Naive thymus-derived CD4-positive, alpha-beta T cell (primary cell): ENCODE measurements at regions of chr16 and their contacts with region 1.

Region 1: DNA sequence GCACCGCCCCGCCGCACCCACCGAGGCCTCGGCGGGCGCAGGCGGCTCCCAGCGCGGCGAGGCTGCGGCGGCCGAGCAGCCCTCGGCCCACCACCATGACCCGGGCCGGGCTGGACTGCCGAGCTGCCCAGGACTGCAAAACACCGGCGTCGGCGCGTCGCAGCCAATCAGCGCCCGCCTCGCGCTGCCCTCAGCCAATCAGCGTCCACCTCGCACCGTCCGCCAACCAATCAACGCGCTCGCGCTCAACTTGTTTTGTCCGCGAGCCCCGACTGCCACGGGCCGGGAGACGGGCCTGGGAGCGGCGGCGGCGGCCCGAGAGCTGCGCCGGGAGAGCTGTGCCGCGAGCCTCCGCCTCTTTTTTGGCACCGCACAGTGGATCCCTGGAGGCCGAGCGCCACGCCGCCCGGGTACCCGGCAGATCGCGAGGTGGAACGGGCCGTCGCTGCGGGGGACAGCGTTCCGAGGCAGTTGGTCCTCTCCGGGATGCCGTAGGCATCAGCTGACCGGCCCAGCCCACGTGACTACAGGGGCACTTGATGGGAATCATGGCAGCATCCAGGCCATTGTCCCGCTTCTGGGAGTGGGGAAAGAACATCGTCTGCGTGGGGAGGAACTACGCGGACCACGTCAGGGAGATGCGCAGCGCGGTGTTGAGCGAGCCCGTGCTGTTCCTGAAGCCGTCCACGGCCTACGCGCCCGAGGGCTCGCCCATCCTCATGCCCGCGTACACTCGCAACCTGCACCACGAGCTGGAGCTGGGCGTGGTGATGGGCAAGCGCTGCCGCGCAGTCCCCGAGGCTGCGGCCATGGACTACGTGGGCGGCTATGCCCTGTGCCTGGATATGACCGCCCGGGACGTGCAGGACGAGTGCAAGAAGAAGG is at the starts of genes FAHD1 and HAGH:
- DNase-seq: peak; percentile 83 to 98 (median 92)
- ATAC-seq: peak; percentile 91
- H3K4me3 ChIP-seq: peak within 1 kb of the TSS; percentile 99
- H3K4me3 Mint-ChIP-seq: peak within 1 kb of the TSS; percentile 82 to 98 (median 93)
- H3K27ac ChIP-seq: peak within 1 kb of the TSS; percentile 78
- H3K27ac Mint-ChIP-seq: peak within 1 kb of the TSS; percentile 85 to 94 (median 91)
- H3K4me1 ChIP-seq: peaks cover 19 to 26% of the 10 kb centered on the region in 2 donors
- H3K4me1 Mint-ChIP-seq: peaks cover 21 to 62% (median 44%) of the 10 kb centered on the region in 7 donors
- H3K27me3 ChIP-seq: no peaks in the 10 kb centered on the region
- H3K27me3 Mint-ChIP-seq: no peaks in the 10 kb centered on the region
- total RNA-seq, gene FAHD1: 7.8 to 12.9 (median 9.7) TPM
- total RNA-seq, gene HAGH: 46.2 to 72.9 (median 48.9) TPM

Region 2: DNA sequence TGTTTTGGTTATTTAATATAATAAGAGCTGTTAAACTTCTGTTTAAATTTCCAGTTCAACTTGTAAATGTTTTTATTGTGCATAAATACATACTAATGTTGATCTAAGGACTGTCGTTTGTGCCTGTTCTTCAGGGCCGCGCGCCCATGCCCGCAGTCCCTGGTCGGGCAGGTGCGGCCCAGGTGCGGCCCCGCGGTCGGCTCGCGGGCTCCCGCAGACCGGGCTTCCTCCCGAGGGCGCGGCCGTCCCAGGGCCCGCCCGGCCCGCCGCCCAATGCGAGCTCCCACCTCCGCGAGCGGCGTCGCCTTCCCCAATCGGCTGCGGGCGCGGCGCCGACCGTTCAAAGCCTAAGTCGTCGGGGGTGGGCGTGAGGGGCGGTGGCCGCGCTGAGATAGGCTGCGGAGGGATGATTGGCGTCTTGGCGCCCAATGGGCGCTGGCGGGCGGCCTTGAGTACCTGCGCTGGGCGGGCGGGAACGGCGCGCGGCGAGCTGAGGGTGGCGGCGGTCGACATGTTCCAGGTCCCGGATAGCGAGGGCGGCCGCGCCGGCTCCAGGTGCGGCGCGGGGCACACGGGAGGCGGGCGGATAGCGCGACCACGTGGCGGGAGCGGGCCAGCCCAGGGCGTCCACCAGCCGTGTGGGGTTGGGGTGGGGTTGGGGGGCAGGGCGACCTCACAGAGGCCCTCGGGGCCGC is 149.0 kb before region 1 on chr16 and contains the start of gene JPT2:
- CTCF ChIA-PET with region 1: no interaction called
- POLR2A ChIA-PET with region 1: interaction called, 3 read pairs
- intact Hi-C with region 1: loop called in 1 of 2 experiments (anchors 1 kb)
- DNase-seq: peak; percentile 89 to 97 (median 94)
- ATAC-seq: peak; percentile 98
- H3K4me3 ChIP-seq: peak within 1 kb of the TSS; percentile 59
- H3K4me3 Mint-ChIP-seq: peak within 1 kb of the TSS; percentile 81 to 90 (median 88)
- H3K27ac ChIP-seq: peak within 1 kb of the TSS; percentile 78
- H3K27ac Mint-ChIP-seq: peak within 1 kb of the TSS; percentile 64 to 91 (median 78)
- H3K4me1 ChIP-seq: no peaks in the 10 kb centered on the region
- H3K4me1 Mint-ChIP-seq: peaks cover 24 to 42% (median 36%) of the 10 kb centered on the region in 7 donors
- H3K27me3 ChIP-seq: no peaks in the 10 kb centered on the region
- H3K27me3 Mint-ChIP-seq: no peaks in the 10 kb centered on the region
- total RNA-seq, gene JPT2: 12.6 to 67.2 (median 36.4) TPM

Region 3: DNA sequence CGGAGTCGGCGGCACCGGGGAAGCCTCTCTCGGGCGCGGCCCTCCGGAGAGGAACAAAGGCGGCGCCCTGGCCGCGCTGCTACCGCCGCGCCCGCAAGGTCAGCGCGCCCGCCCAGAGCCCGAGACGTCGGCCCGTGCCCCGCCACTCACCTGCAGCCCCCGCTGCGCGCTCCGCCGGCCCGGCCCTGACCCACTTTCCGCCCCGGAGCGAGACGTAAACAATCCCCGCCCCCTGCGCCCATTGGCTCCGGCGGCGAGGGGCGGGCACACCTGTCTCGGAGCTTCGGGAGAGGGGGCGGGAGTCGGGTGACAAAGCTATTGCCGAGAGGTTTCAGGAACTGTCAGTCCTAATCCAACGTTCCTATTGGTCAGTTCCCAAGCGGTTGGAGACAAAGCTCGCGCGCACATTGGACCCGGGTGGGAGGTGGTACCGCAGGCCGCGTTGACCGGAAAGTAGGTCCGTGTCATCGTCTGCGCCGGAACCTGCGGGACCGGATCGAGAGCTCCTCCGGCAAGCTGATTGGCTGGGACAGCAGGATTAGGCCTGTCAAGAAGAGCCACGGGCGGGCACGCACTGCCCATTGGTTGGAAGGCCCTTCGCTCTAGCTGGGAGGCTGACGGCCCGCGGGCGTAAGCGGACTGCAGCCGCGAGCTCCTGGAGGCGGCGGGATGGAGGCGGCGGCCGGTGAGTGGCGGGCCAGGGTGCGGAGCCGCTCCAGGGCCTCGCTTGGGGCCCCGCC is 44.4 kb before region 1 on chr16 and contains the starts of genes NUBP2 and SPSB3:
- CTCF ChIA-PET with region 1: interaction called, 3 read pairs
- POLR2A ChIA-PET with region 1: interaction called, 33 read pairs
- intact Hi-C with region 1: loop called (anchors 1 kb)
- DNase-seq: peak; percentile 83 to 98 (median 97)
- ATAC-seq: peak; percentile 92
- H3K4me3 ChIP-seq: peak within 1 kb of the TSS; percentile 92
- H3K4me3 Mint-ChIP-seq: peak within 1 kb of the TSS; percentile 90 to 98 (median 94)
- H3K27ac ChIP-seq: peak within 1 kb of the TSS; percentile 76
- H3K27ac Mint-ChIP-seq: peak within 1 kb of the TSS; percentile 77 to 98 (median 93)
- H3K4me1 ChIP-seq: peaks cover 13 to 28% of the 10 kb centered on the region in 2 donors
- H3K4me1 Mint-ChIP-seq: peaks cover 0 to 48% (median 22%) of the 10 kb centered on the region in 7 donors
- H3K27me3 ChIP-seq: no peaks in the 10 kb centered on the region
- H3K27me3 Mint-ChIP-seq: peaks cover 0 to 2% (median 0%) of the 10 kb centered on the region in 5 donors
- total RNA-seq, gene NUBP2: 39.3 to 60.2 (median 48.6) TPM
- total RNA-seq, gene SPSB3: 38.2 to 127 (median 72.3) TPM

Region 4: GRCh38 chr16:1812732-1813163 is 14.2 kb before region 1 on chr16:
- CTCF ChIA-PET with region 1: no interaction called
- POLR2A ChIA-PET with region 1: no interaction called
- intact Hi-C with region 1: loop called in 1 of 2 experiments (anchors 1 kb)
- DNase-seq: peak in 8 of 9 donors; percentile 43 to 63 (median 52)
- ATAC-seq: peak; percentile 85
- H3K4me3 ChIP-seq: no peak overlapping the region
- H3K4me3 Mint-ChIP-seq: no peak overlapping the region
- H3K27ac ChIP-seq: no peak overlapping the region
- H3K27ac Mint-ChIP-seq: peak overlapping the region in 3 of 9 donors; percentile 10 to 57 (median 21)
- H3K4me1 ChIP-seq: no peaks in the 10 kb centered on the region
- H3K4me1 Mint-ChIP-seq: peaks cover 5 to 14% (median 9%) of the 10 kb centered on the region in 7 donors
- H3K27me3 ChIP-seq: no peaks in the 10 kb centered on the region
- H3K27me3 Mint-ChIP-seq: no peaks in the 10 kb centered on the region

Region 5: DNA sequence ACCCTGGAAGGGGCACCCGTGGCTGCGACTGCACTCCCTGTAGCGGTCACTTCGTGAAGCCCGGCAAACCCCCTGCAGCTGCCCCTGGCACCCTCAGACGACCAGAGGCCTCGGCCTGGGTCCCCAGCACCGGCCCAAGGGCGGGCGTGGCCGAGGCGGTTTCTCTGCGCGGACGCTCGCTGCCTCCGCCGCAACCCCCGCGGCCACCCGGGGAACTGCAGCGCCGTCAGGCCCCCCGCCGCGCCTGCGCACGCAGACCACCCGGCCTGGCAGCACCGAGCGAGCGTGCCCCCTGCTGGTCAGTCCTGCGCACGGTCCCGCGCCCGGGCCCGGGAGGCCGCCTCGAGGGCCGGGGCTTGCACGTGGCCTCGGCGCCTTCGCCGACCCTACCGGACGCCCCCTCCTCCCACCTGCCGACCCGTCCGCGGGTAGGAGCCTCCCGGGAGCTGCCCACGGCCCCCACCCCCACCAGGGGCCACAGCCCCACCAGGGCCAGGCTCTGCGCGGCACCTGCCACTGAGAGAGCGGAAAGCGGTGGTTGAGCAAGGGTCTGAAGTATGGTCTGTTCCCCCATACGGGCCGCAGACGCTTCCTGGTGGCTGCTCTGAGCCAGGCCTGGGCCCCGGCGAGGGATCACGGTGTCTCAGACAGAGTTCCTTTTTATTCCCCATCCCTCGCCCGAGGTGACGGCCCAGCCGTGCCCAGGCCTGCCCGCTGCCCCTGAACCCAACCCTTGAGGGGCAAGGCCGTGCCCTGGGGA is 102.8 kb after region 1 on chr16:
- CTCF ChIA-PET with region 1: no interaction called
- POLR2A ChIA-PET with region 1: no interaction called
- intact Hi-C with region 1: loop called in 1 of 2 experiments (anchors 1 kb)
- DNase-seq: peak; percentile 83 to 99 (median 91)
- ATAC-seq: peak; percentile 100
- H3K4me3 ChIP-seq: peak overlapping the region; percentile 48
- H3K4me3 Mint-ChIP-seq: peak overlapping the region in 6 of 10 donors; percentile 30 to 82 (median 74)
- H3K27ac ChIP-seq: peak overlapping the region; percentile 64
- H3K27ac Mint-ChIP-seq: no peak overlapping the region
- H3K4me1 ChIP-seq: no peaks in the 10 kb centered on the region
- H3K4me1 Mint-ChIP-seq: peaks cover 2 to 8% (median 4%) of the 10 kb centered on the region in 7 donors
- H3K27me3 ChIP-seq: no peaks in the 10 kb centered on the region
- H3K27me3 Mint-ChIP-seq: peaks cover 0 to 3% (median 2%) of the 10 kb centered on the region in 5 donors

Region 6: GRCh38 chr16:2047330-2048115 is 220.6 kb after region 1 on chr16 and contains the starts of genes NTHL1 and TSC2:
- CTCF ChIA-PET with region 1: interaction called, 3 read pairs
- POLR2A ChIA-PET with region 1: no interaction called
- intact Hi-C with region 1: loop called in 1 of 2 experiments (anchors 2 kb)
- DNase-seq: peak; percentile 81 to 95 (median 87)
- ATAC-seq: peak; percentile 98
- H3K4me3 ChIP-seq: peak within 1 kb of the TSS; percentile 72
- H3K4me3 Mint-ChIP-seq: peak within 1 kb of the TSS; percentile 82 to 97 (median 93)
- H3K27ac ChIP-seq: peak within 1 kb of the TSS; percentile 82
- H3K27ac Mint-ChIP-seq: peak within 1 kb of the TSS in 8 of 9 donors; percentile 57 to 91 (median 82)
- H3K4me1 ChIP-seq: peaks cover 6 to 12% of the 10 kb centered on the region in 2 donors
- H3K4me1 Mint-ChIP-seq: peaks cover 16 to 23% (median 19%) of the 10 kb centered on the region in 7 donors
- H3K27me3 ChIP-seq: no peaks in the 10 kb centered on the region
- H3K27me3 Mint-ChIP-seq: no peaks in the 10 kb centered on the region
- total RNA-seq, gene NTHL1: 4.4 to 27.0 (median 7.5) TPM
- total RNA-seq, gene TSC2: 126 to 155 (median 147) TPM